Posterior vena cava (tissue), 2 donors: ENCODE measurements at regions of chr12 and their contacts with region 1.

Region 1: GRCh38 chr12:74424778-74425177 is 112.9 kb upstream of the ATXN7L3B start:
- DNase-seq: no peak

Region 2: DNA sequence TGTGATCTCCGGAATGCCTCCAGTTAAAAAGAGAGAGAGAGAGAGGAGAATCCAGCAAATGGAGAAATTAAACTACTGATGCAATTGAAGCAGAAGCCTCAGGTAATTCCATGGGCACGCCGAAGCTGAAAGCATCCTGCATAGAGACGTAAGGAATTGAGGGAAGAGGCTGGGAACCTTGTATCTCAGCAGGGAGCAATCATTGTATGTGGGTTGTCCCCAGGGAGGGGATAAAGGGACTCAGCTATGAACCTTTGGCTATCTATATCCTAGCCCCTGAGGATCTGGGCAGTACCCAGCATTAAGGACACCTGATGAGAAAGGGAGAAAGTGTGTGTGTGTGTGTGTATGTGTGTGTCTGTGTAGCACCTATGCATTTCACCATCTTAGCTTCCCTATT is 17.1 kb after region 1 on chr12:
- intact Hi-C with region 1: loop called in 1 of 2 experiments (anchors 1 kb)
- DNase-seq: no peak